GM12878 (cell line): ENCODE measurements at regions of chr6 and their contacts with region 1.

Region 1: GRCh38 chr6:126176282-126176681 is 163.6 kb upstream of the CENPW start:
- DNase-seq: no peak
- ATAC-seq: peak; percentile 71
- H3K4me3 ChIP-seq: no peak overlapping the region
- H3K27ac ChIP-seq: no peak overlapping the region
- H3K4me1 ChIP-seq: no peaks in the 10 kb centered on the region
- H3K27me3 ChIP-seq: no peaks in the 10 kb centered on the region
- CTCF ChIP-seq: peak in 2 of 3 experiments; percentile 16 to 49; a peak in 2 of 6 replicates
- EP300 ChIP-seq: no peak
- POLR2A ChIP-seq: no peak
- RAD21 ChIP-seq: peak; percentile 74

Region 2: DNA sequence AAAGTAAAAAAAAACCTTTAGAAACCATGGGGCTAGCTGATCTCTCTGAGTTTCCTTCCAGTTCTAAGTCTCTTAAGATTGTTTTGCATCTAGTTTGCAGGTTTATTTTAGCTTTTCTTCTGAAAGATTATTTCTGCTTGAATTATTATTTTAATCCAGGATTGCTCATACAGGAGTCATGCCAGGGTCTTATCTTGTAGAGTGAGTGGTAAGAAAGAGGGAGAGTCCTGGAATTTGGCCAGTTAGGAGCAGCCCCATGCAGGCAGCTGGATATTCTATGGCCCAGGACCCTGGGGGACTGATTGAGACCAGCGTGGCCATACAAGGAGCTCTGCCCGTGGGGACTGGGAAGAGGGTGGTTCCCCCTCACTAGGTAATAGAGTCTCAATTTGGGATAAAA is 605.8 kb before region 1 on chr6:
- CTCF ChIA-PET with region 1: no interaction called
- POLR2A ChIA-PET with region 1: no interaction called
- RAD21 ChIA-PET with region 1: no interaction called
- SMC1A ChIA-PET with region 1: no interaction called
- in situ Hi-C with region 1: no loop called
- intact Hi-C with region 1: no loop called
- DNase-seq: no peak
- ATAC-seq: no peak
- H3K4me3 ChIP-seq: no peak overlapping the region
- H3K27ac ChIP-seq: no peak overlapping the region
- H3K4me1 ChIP-seq: no peaks in the 10 kb centered on the region
- H3K27me3 ChIP-seq: peaks cover 0 to 3% of the 10 kb centered on the region in 2 experiments; a peak in 2 of 4 replicates
- CTCF ChIP-seq: no peak
- EP300 ChIP-seq: no peak
- POLR2A ChIP-seq: no peak
- RAD21 ChIP-seq: no peak

Region 3: GRCh38 chr6:126054258-126054702 is 122.0 kb before region 1 on chr6:
- CTCF ChIA-PET with region 1: no interaction called
- POLR2A ChIA-PET with region 1: no interaction called
- RAD21 ChIA-PET with region 1: no interaction called
- SMC1A ChIA-PET with region 1: no interaction called
- in situ Hi-C with region 1: no loop called
- intact Hi-C with region 1: no loop called
- DNase-seq: no peak
- ATAC-seq: no peak; the same call in 2 of the 3 replicates
- H3K4me3 ChIP-seq: no peak overlapping the region
- H3K27ac ChIP-seq: no peak overlapping the region
- H3K4me1 ChIP-seq: no peaks in the 10 kb centered on the region
- H3K27me3 ChIP-seq: no peaks in the 10 kb centered on the region
- CTCF ChIP-seq: no peak
- EP300 ChIP-seq: no peak
- POLR2A ChIP-seq: no peak
- RAD21 ChIP-seq: no peak

Region 4: DNA sequence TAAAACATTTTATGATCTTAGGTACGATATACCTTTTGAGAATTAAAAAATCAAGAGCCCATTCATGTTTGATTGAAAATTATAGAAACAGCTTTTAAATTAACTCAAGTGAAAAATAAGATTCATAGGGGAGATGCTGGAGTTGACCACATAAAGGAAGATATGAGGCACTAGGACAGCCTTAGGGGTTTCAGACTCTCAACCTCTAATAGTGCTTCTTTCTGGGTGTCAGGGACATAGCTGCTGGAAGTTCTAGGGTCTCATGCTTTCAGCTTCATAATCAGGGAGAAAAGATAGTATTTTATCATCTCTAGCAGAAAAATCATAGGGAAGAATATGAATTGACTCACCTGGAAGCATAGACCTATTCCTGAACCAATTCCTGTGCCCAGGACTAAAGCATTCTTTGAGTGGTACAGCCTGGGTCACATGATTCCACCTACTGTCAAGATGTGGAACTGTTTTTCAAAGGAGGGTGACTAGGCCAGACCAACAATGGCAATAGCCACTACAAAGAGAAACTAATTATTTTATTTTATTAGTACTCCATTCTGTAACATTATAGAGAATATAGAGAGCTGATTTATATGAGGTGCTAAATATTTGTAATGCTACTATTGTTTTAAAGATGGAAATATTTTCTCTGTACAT is 135.9 kb after region 1 on chr6:
- CTCF ChIA-PET with region 1: interaction called, 4 read pairs
- POLR2A ChIA-PET with region 1: no interaction called
- RAD21 ChIA-PET with region 1: interaction called, 7 read pairs
- SMC1A ChIA-PET with region 1: interaction called, 6 read pairs
- in situ Hi-C with region 1: no loop called
- intact Hi-C with region 1: loop called (anchors 2 kb)
- DNase-seq: no peak
- ATAC-seq: peak; percentile 98
- H3K4me3 ChIP-seq: no peak overlapping the region
- H3K27ac ChIP-seq: no peak overlapping the region
- H3K4me1 ChIP-seq: no peaks in the 10 kb centered on the region
- H3K27me3 ChIP-seq: no peaks in the 10 kb centered on the region
- CTCF ChIP-seq: peak; percentile 30 to 44 (median 41); a peak in 4 of 6 replicates
- EP300 ChIP-seq: no peak
- POLR2A ChIP-seq: no peak
- RAD21 ChIP-seq: peak; percentile 39

Region 5: GRCh38 chr6:126339796-126340609 is 163.7 kb after region 1 on chr6 and contains the start of gene CENPW:
- CTCF ChIA-PET with region 1: interaction called, 3 read pairs
- POLR2A ChIA-PET with region 1: no interaction called
- RAD21 ChIA-PET with region 1: interaction called, 3 read pairs
- SMC1A ChIA-PET with region 1: no interaction called
- in situ Hi-C with region 1: no loop called
- intact Hi-C with region 1: loop called (anchors 5 kb)
- DNase-seq: peak; percentile 48
- ATAC-seq: peak; percentile 85
- H3K4me3 ChIP-seq: peak within 1 kb of the TSS; percentile 90
- H3K27ac ChIP-seq: peak within 1 kb of the TSS; percentile 66
- H3K4me1 ChIP-seq: peaks cover 8% of the 10 kb centered on the region
- H3K27me3 ChIP-seq: no peaks in the 10 kb centered on the region
- CTCF ChIP-seq: no peak
- EP300 ChIP-seq: no peak
- POLR2A ChIP-seq: peak; percentile 83
- RAD21 ChIP-seq: no peak
- polyA plus RNA-seq, gene CENPW: 237 to 283 TPM

Region 6: GRCh38 chr6:126529637-126530362 is 353.5 kb after region 1 on chr6:
- CTCF ChIA-PET with region 1: no interaction called
- POLR2A ChIA-PET with region 1: no interaction called
- RAD21 ChIA-PET with region 1: no interaction called
- SMC1A ChIA-PET with region 1: no interaction called
- in situ Hi-C with region 1: no loop called
- intact Hi-C with region 1: loop called (anchors 5 kb)
- DNase-seq: no peak
- ATAC-seq: 0 out of 3 replicates have a peak, but pooled peaks have one; percentile 29
- H3K4me3 ChIP-seq: no peak overlapping the region
- H3K27ac ChIP-seq: no peak overlapping the region
- H3K4me1 ChIP-seq: no peaks in the 10 kb centered on the region
- H3K27me3 ChIP-seq: no peaks in the 10 kb centered on the region
- CTCF ChIP-seq: peak in 1 of 3 experiments; percentile 12; a peak in 1 of 6 replicates
- EP300 ChIP-seq: no peak
- POLR2A ChIP-seq: no peak
- RAD21 ChIP-seq: peak; percentile 19; the same call in 1 of the 2 replicates